B cell (primary cell): ENCODE measurements at regions of chr10 and their contacts with region 1.

Region 1: DNA sequence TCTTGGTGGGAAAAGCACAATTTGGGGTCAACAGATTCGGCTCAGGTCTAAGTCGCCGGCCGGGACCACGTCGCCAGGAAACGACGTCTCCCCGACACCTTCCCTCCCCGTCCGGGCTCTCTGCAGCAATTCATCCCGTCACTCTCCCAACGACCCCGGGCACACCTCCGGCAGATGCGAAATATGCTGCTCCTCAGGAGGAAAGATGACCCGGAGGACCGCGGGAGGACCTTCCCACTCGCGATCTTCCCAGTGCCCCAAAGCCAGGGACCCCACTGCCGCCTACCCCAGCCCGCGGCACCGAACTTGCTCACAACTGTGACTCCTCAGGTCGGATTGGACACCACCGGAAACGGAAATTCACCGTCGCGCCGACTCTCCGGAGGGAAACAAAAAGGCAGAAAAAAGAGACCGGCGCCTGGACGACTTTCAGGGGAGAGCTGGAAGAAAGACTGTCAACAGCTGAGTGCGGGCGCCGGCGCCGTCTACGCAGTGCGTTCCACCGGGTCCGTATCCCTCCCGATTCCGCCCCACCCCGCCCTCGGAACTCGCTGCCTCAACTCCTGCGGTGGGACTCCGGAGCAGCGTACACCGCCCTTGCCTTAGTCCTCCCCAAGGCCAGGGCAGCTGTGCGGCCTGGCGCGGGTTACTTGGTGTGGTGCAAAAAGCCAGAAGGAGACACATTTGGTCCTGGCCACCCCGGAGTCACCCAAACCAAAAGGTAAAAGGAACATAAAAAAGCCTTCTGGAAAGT is 13.8 kb upstream of the SEC24C start:
- DNase-seq: peak; percentile 91
- ATAC-seq: peak; percentile 89
- H3K4me3 ChIP-seq: peak overlapping the region; percentile 64 to 90 (median 86)
- H3K4me3 Mint-ChIP-seq: peak overlapping the region; percentile 98
- H3K27ac ChIP-seq: peak overlapping the region; percentile 51 to 86
- H3K27ac Mint-ChIP-seq: peak overlapping the region; percentile 96
- H3K4me1 ChIP-seq: peaks cover 7 to 8% of the 10 kb centered on the region in 2 donors
- H3K4me1 Mint-ChIP-seq: peaks cover 20% of the 10 kb centered on the region
- H3K27me3 ChIP-seq: no peaks in the 10 kb centered on the region
- H3K27me3 Mint-ChIP-seq: no peaks in the 10 kb centered on the region
- CTCF ChIP-seq: no peak

Region 2: DNA sequence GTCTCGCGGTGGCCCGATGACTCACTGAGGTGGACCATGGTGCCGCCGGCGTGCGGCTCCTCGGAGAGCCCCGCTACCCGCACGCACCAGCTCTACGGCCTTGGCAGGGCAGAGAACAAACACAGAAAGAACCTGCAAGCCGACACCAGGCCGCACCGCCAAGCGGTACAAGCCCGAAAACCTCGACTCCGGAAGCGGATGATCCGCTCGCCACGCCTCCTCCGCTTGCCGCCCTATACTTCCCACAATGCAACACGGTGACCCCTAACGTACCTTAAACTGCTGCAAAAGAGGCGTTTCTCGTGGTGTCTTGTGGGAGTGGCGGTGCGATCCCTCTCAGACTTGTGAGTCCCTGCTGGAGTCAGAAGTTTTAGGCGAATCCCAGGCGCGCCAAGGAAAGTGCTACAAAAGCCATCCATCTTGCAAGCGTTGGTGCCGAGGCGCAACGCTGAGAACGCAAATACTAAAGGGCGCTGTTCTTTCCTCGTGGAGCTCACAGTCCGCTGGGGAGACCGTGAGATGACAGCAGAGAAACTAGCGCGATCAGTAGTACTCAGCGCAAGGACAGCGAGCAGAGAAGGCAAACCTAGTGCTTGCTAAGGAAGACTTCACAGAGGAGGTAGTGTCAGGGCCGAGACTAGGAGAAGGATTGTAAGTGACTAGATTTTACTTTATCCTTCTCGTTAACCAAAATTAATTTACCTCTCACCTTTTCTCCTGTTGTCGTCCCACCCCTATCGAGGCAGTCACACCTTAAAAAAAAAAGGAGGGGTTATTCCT is 477.7 kb before region 1 on chr10 and contains the start of gene MRPS16:
- CTCF ChIA-PET with region 1: no interaction called
- POLR2A ChIA-PET with region 1: interaction called, 3 read pairs
- intact Hi-C with region 1: loop called (anchors 1 kb)
- DNase-seq: peak; percentile 95
- ATAC-seq: peak; percentile 90
- H3K4me3 ChIP-seq: peak within 1 kb of the TSS; percentile 76 to 98 (median 90)
- H3K4me3 Mint-ChIP-seq: peak within 1 kb of the TSS; percentile 100
- H3K27ac ChIP-seq: peak within 1 kb of the TSS; percentile 83 to 92
- H3K27ac Mint-ChIP-seq: peak within 1 kb of the TSS; percentile 90
- H3K4me1 ChIP-seq: peaks cover 23 to 28% of the 10 kb centered on the region in 2 donors
- H3K4me1 Mint-ChIP-seq: peaks cover 43% of the 10 kb centered on the region
- H3K27me3 ChIP-seq: no peaks in the 10 kb centered on the region
- H3K27me3 Mint-ChIP-seq: no peaks in the 10 kb centered on the region
- CTCF ChIP-seq: no peak
- total RNA-seq, gene MRPS16: 47.9 and 49.6 TPM in 2 replicates

Region 3: GRCh38 chr10:73576178-73576889 is 154.0 kb before region 1 on chr10:
- CTCF ChIA-PET with region 1: no interaction called
- POLR2A ChIA-PET with region 1: no interaction called
- intact Hi-C with region 1: no loop called
- DNase-seq: no peak
- ATAC-seq: no peak
- H3K4me3 ChIP-seq: no peak overlapping the region
- H3K4me3 Mint-ChIP-seq: no peak overlapping the region
- H3K27ac ChIP-seq: no peak overlapping the region
- H3K27ac Mint-ChIP-seq: no peak overlapping the region
- H3K4me1 ChIP-seq: no peaks in the 10 kb centered on the region
- H3K4me1 Mint-ChIP-seq: no peaks in the 10 kb centered on the region
- H3K27me3 ChIP-seq: no peaks in the 10 kb centered on the region
- H3K27me3 Mint-ChIP-seq: no peaks in the 10 kb centered on the region
- CTCF ChIP-seq: no peak

Region 4: DNA sequence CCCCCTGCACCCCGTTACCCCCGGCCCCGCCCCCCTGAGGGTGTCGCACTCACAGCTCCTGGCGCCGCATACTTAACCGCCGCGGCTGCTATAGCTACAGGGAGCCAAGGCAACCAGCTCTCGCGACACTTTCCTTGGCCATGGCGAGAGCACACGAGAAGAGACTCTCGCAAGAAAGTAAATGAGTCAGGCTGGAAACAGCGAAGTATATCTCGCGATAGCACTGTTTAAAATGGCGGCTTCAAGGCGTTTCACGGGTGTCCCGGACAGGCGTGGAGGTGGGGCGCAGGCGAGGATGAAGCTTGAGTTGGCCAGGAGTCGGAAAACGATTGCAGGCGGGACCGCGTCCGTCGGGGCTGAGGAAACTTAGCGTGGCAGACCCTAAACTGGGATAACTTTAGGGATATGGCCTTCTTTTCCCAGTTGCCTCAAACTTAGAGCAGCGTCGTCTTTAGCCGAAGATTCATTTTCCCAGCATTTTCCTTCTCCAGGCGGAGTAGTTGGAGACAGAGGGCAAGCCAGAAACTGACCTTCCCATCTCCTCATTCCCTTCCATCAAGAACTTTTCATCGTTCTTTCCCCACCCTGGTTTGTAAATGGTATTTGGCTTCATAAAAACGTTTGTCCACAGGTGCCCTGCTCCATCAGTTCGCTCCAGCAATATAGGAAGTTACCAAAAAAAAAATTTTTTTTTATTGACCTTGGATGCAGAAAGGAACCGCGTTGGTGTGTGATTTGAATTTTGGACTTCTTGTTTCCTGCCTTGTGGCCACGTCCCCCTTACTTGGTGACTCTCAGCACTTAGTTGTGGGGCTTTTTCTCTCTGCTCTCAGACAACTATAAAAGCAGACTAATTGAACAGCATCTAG is 104.2 kb before region 1 on chr10:
- CTCF ChIA-PET with region 1: no interaction called
- POLR2A ChIA-PET with region 1: no interaction called
- intact Hi-C with region 1: loop called (anchors 1 kb)
- DNase-seq: peak; percentile 96
- ATAC-seq: peak; percentile 91
- H3K4me3 ChIP-seq: peak overlapping the region; percentile 71 to 97 (median 90)
- H3K4me3 Mint-ChIP-seq: peak overlapping the region; percentile 98
- H3K27ac ChIP-seq: peak overlapping the region; percentile 70 to 92
- H3K27ac Mint-ChIP-seq: peak overlapping the region; percentile 97
- H3K4me1 ChIP-seq: peaks cover 11% of the 10 kb centered on the region in 2 donors
- H3K4me1 Mint-ChIP-seq: peaks cover 16% of the 10 kb centered on the region
- H3K27me3 ChIP-seq: no peaks in the 10 kb centered on the region
- H3K27me3 Mint-ChIP-seq: no peaks in the 10 kb centered on the region
- CTCF ChIP-seq: no peak

Region 5: GRCh38 chr10:73717556-73717955 is 12.8 kb before region 1 on chr10:
- CTCF ChIA-PET with region 1: no interaction called
- POLR2A ChIA-PET with region 1: no interaction called
- intact Hi-C with region 1: loop called (anchors 1 kb)
- DNase-seq: peak; percentile 58
- ATAC-seq: peak; percentile 61
- H3K4me3 ChIP-seq: no peak overlapping the region
- H3K4me3 Mint-ChIP-seq: no peak overlapping the region
- H3K27ac ChIP-seq: peak overlapping the region in 1 of 2 donors; percentile 37
- H3K27ac Mint-ChIP-seq: peak overlapping the region; percentile 54
- H3K4me1 ChIP-seq: peaks cover 8% of the 10 kb centered on the region in 2 donors
- H3K4me1 Mint-ChIP-seq: peaks cover 10% of the 10 kb centered on the region
- H3K27me3 ChIP-seq: no peaks in the 10 kb centered on the region
- H3K27me3 Mint-ChIP-seq: no peaks in the 10 kb centered on the region
- CTCF ChIP-seq: no peak

Region 6: DNA sequence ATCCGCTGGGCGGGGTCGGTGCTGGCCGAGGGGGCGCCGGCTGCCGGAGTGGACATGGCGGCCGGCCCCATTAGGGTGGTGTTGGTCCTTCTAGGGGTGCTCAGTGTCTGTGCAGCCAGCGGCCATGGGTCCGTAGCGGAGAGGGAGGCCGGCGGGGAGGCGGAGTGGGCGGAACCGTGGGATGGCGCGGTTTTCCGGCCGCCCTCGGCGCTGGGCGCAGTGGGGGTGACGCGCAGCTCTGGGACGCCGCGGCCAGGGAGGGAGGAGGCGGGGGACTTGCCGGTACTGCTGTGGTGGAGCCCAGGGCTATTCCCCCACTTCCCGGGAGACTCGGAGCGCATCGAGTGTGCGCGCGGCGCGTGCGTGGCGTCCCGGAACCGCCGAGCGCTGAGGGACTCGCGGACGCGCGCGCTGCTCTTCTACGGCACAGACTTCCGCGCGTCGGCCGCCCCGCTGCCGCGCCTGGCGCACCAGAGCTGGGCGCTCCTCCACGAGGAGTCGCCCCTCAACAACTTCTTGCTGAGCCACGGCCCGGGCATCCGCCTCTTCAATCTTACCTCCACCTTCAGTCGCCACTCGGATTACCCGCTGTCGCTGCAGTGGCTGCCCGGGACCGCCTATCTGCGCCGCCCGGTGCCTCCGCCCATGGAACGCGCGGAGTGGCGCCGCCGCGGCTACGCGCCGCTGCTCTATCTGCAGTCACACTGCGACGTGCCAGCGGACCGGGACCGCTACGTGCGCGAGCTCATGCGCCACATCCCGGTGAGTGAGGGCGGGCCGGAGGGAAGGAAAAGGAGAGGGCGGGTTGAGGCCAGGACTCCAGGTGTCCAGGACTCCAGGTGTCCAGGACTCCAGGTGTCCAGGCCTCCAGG is 42.2 kb after region 1 on chr10:
- CTCF ChIA-PET with region 1: interaction called, 3 read pairs
- POLR2A ChIA-PET with region 1: interaction called, 8 read pairs
- intact Hi-C with region 1: loop called (anchors 1 kb)
- DNase-seq: peak; percentile 91
- ATAC-seq: peak; percentile 66
- H3K4me3 ChIP-seq: peak overlapping the region; percentile 66 to 94 (median 89)
- H3K4me3 Mint-ChIP-seq: peak overlapping the region; percentile 97
- H3K27ac ChIP-seq: peak overlapping the region; percentile 85 to 93
- H3K27ac Mint-ChIP-seq: peak overlapping the region; percentile 98
- H3K4me1 ChIP-seq: peaks cover 30 to 47% of the 10 kb centered on the region in 2 donors
- H3K4me1 Mint-ChIP-seq: peaks cover 63% of the 10 kb centered on the region
- H3K27me3 ChIP-seq: no peaks in the 10 kb centered on the region
- H3K27me3 Mint-ChIP-seq: no peaks in the 10 kb centered on the region
- CTCF ChIP-seq: no peak

Region 7: DNA sequence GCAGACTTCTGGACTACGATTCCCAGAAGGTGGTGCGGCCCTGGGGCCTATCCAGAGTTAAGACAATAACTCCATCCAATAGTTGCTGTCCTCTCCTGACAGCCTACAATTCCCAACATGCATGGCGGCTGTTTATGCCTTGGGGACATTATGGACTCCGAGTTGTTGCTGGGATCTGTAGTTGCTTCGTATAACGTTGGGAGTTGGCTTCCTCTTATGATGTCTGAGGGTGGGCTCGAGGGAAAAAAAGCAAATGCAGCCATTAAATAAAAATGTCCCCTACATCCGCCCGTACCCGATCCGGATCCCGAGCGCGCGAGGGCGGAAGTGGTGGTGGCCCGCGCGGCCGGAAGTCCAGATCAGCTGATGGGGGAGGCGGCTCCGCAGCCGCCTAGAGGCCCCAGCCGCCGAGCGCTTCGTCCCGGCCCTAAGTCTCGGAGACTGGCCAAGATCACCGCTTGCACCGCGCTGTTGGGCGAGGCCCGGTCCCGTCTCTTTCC is 54.9 kb after region 1 on chr10 and contains the start of gene ZSWIM8:
- CTCF ChIA-PET with region 1: interaction called, 3 read pairs
- POLR2A ChIA-PET with region 1: interaction called, 5 read pairs
- intact Hi-C with region 1: loop called (anchors 1 kb)
- DNase-seq: peak; percentile 95
- ATAC-seq: peak; percentile 87
- H3K4me3 ChIP-seq: peak within 1 kb of the TSS; percentile 56 to 97 (median 85)
- H3K4me3 Mint-ChIP-seq: peak within 1 kb of the TSS; percentile 96
- H3K27ac ChIP-seq: peak within 1 kb of the TSS; percentile 53 to 74
- H3K27ac Mint-ChIP-seq: peak within 1 kb of the TSS; percentile 98
- H3K4me1 ChIP-seq: peaks cover 32 to 46% of the 10 kb centered on the region in 2 donors
- H3K4me1 Mint-ChIP-seq: peaks cover 48% of the 10 kb centered on the region
- H3K27me3 ChIP-seq: no peaks in the 10 kb centered on the region
- H3K27me3 Mint-ChIP-seq: no peaks in the 10 kb centered on the region
- CTCF ChIP-seq: no peak
- total RNA-seq, gene ZSWIM8: 110 and 113 TPM in 2 replicates